Dendritic cell treated with granulocyte-macrophage colony-stimulating factor and Interleukin-4, amounts not matched to agents 40 ng/mL and 50 ng/mL, for 4 days (primary cell): ENCODE measurements at regions of chr6 and their contacts with region 1.

Region 1: DNA sequence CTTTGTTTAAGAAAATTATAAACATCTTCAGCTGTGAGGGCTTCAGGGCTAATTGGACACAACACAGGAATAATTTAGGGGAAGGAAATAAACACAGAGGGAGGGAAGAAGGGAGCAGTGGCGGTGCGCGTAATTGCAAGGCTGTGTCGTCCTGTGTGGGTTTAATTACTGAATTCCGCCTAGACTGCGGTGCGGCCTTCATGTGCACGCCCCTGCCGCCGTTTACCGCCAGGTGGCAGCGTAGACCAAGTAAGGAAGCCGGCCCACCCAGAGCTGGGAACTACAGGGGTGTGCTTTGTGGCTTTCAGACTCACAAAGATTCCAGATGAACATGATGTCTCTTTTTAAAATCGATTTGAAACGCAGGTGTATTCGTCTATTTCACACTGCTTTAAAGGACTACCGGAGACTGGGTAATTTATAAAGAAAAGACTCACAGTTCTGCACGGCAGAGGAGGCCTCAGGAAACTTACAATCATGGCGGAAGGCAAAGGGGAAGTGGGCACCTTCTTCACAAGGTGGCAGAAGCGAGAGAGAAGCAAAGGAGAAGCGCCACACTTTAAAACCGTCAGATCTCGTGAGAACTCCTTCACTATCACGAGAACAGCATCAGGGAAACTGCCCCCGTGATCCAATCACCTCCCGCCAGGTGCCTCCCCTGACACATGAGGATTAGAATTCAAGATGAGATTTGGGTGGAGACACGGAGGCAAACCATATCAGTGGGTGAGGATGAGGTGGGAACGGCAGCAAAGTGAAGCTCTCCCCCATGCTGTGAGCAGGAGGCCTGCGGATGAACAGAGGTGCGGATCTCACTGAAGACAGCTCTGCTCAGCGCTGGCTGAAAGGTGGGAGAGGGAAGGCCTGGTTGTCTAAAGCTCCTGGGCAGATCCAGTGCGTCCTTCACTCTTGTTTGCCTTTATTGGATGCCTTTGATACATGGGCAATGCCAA is 222.0 kb upstream of the PDE10A start:
- H3K4me3 Mint-ChIP-seq: no peak overlapping the region
- H3K27ac Mint-ChIP-seq: no peak overlapping the region
- H3K4me1 Mint-ChIP-seq: peaks cover 6% of the 10 kb centered on the region
- H3K27me3 Mint-ChIP-seq: peaks cover 4% of the 10 kb centered on the region

Region 2: DNA sequence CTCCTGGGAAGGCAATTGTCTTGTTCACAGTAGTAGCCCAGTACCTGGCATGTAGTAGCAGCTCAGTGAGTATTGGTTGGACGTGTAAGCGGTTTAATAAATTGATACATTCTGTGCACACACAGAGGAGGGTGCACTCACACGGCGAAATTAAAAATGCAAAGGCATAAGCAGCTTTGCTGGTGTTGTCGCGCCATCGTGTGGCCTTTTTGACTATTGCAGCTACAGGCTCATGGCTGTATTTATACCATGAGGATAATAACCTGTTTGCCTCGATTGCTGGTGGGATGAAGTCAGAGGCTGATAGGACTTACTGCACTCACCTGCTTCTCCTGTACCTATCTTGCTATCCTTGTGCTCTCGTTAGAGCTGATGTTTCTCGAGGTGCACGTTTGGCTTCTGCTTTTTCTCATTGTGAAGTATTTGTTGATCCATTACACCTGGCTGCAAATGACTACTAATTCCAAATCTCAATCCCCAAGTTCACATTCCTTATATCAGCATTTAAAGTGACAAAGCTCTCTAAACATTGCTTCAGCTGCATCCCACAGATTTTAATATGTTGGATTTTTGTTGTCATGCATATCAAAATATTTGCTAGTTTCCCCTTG is 221.1 kb after region 1 on chr6:
- intact Hi-C with region 1: loop called (anchors 2 kb)
- H3K4me3 Mint-ChIP-seq: no peak overlapping the region
- H3K27ac Mint-ChIP-seq: no peak overlapping the region
- H3K4me1 Mint-ChIP-seq: no peaks in the 10 kb centered on the region
- H3K27me3 Mint-ChIP-seq: peaks cover 5% of the 10 kb centered on the region